Activated T-helper 2 cell treated with anti-CD3 and anti-CD28 coated beads, Interferon-gamma antibody, Interleukin-2, Interleukin-4, amounts not matched to agents 10 μg/mL and 5 μg/mL and 100 μg/mL, durations not matched to agents 14 hours and 24 hours and 36 hours (primary cell): ENCODE measurements at regions of chr2 and their contacts with region 1.

Region 1: GRCh38 chr2:20424300-20425290 is 22.3 kb upstream of the RHOB start:
- DNase-seq: no peak
- H3K4me3 Mint-ChIP-seq: peak overlapping the region; percentile 2
- H3K27ac Mint-ChIP-seq: peak overlapping the region; percentile 78
- H3K4me1 Mint-ChIP-seq: peaks cover 18% of the 10 kb centered on the region
- H3K27me3 Mint-ChIP-seq: peaks cover 4% of the 10 kb centered on the region

Region 2: GRCh38 chr2:20242060-20243006 is 182.3 kb before region 1 on chr2:
- intact Hi-C with region 1: loop called (anchors 5 kb)
- DNase-seq: no peak
- H3K4me3 Mint-ChIP-seq: peak overlapping the region; percentile 39
- H3K27ac Mint-ChIP-seq: no peak overlapping the region
- H3K4me1 Mint-ChIP-seq: no peaks in the 10 kb centered on the region
- H3K27me3 Mint-ChIP-seq: peaks cover 12% of the 10 kb centered on the region

Region 3: DNA sequence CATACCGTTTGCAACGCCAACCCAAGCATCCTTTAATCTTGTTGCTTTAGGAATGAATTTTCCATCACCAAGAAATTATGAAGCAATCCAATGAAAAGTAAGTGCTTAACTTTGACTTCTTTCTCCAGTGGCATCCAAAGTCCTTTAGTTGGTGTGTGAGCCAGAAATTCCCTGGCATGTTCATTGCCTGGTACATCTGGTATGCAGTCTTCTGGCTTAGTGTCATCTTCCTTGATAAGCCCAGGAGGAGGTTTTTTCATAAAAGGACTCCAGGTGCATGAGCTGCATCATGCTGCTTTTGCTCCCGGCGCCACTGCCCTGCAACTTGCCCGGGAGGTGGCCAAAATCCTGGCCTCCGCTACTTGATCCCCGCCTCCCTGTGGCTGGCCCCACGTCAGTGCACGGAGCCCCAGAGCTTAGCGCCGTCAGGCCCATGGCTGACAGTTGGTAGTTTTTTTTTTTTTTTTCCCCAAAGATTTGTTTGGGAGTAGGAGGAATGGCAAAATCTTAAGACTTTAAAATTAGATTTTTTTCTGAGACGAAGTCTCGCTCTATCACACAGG is 132.7 kb before region 1 on chr2:
- intact Hi-C with region 1: no loop called
- DNase-seq: no peak
- H3K4me3 Mint-ChIP-seq: no peak overlapping the region
- H3K27ac Mint-ChIP-seq: no peak overlapping the region
- H3K4me1 Mint-ChIP-seq: peaks cover 6% of the 10 kb centered on the region
- H3K27me3 Mint-ChIP-seq: no peaks in the 10 kb centered on the region

Region 4: DNA sequence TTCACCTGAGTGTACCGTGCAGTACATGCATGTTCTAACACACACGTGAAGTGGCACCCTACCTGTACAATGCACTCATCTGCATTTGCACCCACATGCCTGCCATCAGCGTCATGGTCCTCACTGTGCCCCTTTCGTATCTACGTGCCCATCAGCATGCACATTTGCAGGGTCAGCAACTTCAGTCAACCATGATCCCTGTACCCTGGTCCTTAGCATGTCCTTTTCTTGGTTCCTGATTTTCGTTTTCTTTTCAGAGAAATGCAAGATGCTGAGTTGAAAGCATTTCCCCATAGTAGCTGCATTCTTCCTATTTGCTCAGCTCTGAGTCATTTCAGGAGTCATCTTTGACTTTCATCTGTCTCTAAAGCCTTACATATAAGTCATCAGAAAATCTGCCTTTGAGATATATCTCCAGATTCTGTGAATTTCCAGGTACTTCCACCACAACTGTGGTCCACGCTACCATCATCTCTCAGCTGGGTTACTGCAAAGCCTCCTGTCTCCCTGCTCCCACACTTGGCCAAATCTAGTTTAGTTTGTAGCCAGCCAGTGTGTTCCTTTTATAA is 59.3 kb before region 1 on chr2:
- intact Hi-C with region 1: loop called (anchors 1 kb)
- DNase-seq: peak; percentile 52
- H3K4me3 Mint-ChIP-seq: peak overlapping the region; percentile 9
- H3K27ac Mint-ChIP-seq: peak overlapping the region; percentile 51
- H3K4me1 Mint-ChIP-seq: peaks cover 25% of the 10 kb centered on the region
- H3K27me3 Mint-ChIP-seq: peaks cover 4% of the 10 kb centered on the region

Region 5: DNA sequence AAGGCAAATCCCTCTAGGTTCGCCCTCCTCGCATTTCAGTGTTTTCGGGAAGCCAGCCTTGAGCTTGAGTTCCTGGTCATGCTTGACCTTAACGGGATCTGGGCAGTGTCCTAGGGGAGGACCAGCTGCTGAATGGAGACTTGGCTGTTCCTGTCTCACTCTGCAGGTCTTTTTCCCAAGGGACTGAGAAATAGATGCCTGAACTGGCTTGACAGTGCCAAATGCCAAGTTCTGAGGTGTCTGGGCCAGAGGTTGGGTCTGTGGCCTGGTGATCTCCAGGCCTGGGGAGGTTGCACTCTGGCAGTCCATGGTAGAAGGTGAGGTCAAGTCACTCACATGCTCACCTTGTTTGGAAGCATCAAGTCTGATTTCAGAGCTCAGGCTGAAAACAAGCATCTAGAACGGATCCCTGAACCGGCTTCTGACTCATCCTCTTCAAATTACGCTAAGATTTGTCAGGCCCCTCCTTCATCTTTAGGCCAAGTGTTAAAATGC is 41.9 kb after region 1 on chr2:
- intact Hi-C with region 1: no loop called
- DNase-seq: no peak
- H3K4me3 Mint-ChIP-seq: no peak overlapping the region
- H3K27ac Mint-ChIP-seq: no peak overlapping the region
- H3K4me1 Mint-ChIP-seq: no peaks in the 10 kb centered on the region
- H3K27me3 Mint-ChIP-seq: peaks cover 14% of the 10 kb centered on the region